K562 (cell line): ENCODE measurements at regions of chr3 and their contacts with region 1.

Region 1: GRCh38 chr3:128845778-128846485 is 33.5 kb upstream of the ACAD9 start:
- DNase-seq: peak; percentile 85 to 92 (median 89)
- ATAC-seq: peak; percentile 95
- H3K4me3 ChIP-seq: peak overlapping the region; percentile 8; the same call in 1 of the 2 replicates
- H3K27ac ChIP-seq: peak overlapping the region; percentile 66
- H3K4me1 ChIP-seq: peaks cover 13 to 45% of the 10 kb centered on the region in 2 experiments; a peak in 4 of 5 replicates
- H3K27me3 ChIP-seq: no peaks in the 10 kb centered on the region
- CTCF ChIP-seq: peak; percentile 60 to 82 (median 71)
- EP300 ChIP-seq: peak; percentile 72
- POLR2A ChIP-seq: no peak
- RAD21 ChIP-seq: peak; percentile 55 to 63

Region 2: DNA sequence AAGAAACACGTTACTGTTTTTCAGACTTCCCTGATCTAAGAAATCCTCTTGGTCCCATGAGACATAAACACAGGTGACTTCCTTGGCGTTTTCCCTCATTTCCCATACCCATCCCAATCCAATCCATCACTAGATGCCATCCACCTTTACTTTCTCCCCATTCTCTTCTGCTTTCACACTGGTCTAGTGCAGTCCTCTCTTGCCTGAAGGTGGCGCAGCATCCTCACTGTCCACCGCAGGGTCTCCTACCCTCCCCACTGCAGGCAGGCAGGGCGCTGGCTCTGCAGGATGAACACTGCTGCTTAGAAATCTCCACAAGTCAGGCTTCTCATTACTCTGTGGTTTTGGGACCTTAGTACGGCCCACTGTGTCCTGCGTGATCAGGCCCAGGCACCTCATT is 61.7 kb before region 1 on chr3:
- CTCF ChIA-PET with region 1: interaction called, 3 read pairs
- POLR2A ChIA-PET with region 1: no interaction called
- in situ Hi-C with region 1: no loop called
- intact Hi-C with region 1: loop called (anchors 1 kb)
- DNase-seq: peak; percentile 46 to 71 (median 62)
- ATAC-seq: peak; percentile 99
- H3K4me3 ChIP-seq: no peak overlapping the region
- H3K27ac ChIP-seq: no peak overlapping the region
- H3K4me1 ChIP-seq: peaks cover 0 to 13% of the 10 kb centered on the region in 2 experiments; a peak in 3 of 5 replicates
- H3K27me3 ChIP-seq: no peaks in the 10 kb centered on the region
- CTCF ChIP-seq: peak; percentile 76 to 83 (median 77)
- EP300 ChIP-seq: no peak
- POLR2A ChIP-seq: no peak
- RAD21 ChIP-seq: peak; percentile 56 to 67

Region 3: DNA sequence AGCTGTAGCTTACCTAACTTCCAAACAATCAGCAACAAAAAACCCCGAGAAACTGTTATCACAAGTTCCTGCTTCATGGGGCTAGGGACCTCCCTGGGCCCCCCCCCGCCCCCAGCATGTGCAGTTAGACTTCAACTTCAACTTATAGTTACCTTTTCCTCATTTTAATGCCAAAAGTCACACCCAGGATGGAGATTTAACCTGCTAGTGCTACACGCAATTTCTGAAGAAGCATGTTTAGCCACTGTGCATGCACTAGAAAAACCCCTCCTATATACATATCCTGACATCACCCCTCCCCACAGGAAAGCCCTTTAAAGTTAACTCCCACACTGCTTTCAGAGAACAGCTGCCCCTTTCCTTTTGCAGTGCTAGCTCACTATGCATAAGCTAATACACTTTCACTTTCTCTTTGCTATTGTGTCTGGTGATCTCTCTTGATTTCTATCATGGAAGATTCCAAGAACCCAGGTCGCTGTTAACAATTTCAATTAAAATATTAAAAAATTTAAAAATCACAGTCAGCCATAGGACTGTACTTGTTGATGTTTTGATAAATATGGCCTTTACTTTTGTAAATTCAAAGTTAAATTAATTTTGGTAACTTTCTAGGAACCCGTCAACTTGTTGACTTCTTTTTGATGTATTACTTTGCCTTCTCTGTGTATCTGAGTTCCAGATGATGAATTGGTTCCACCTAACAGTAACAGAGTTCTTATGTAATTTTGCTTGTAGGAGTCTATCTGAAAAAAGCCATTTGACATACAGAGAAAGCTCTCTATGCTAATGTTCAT is 41.7 kb before region 1 on chr3:
- CTCF ChIA-PET with region 1: no interaction called
- POLR2A ChIA-PET with region 1: interaction called, 3 read pairs
- in situ Hi-C with region 1: no loop called
- intact Hi-C with region 1: loop called (anchors 5 kb)
- DNase-seq: peak; percentile 24 to 59 (median 48)
- ATAC-seq: peak; percentile 97
- H3K4me3 ChIP-seq: no peak overlapping the region
- H3K27ac ChIP-seq: peak overlapping the region; percentile 51; the same call in 1 of the 3 replicates
- H3K4me1 ChIP-seq: peaks cover 0 to 22% of the 10 kb centered on the region in 2 experiments; a peak in 3 of 5 replicates
- H3K27me3 ChIP-seq: no peaks in the 10 kb centered on the region
- CTCF ChIP-seq: no peak
- EP300 ChIP-seq: peak; percentile 16; the same call in 1 of the 2 replicates
- POLR2A ChIP-seq: no peak
- RAD21 ChIP-seq: no peak